ENCODE measurements at regions of chr15 and their contacts with region 1.

Region 1: GRCh38 chr15:54353726-54354125 is 375.5 kb downstream of the UNC13C start:
- DNase-seq: no peak
- ATAC-seq: no peak
- H3K4me3 Mint-ChIP-seq: no peak overlapping the region
- H3K27ac Mint-ChIP-seq: no peak overlapping the region
- H3K4me1 Mint-ChIP-seq: no peaks in the 10 kb centered on the region
- H3K27me3 Mint-ChIP-seq: no peaks in the 10 kb centered on the region

Region 2: DNA sequence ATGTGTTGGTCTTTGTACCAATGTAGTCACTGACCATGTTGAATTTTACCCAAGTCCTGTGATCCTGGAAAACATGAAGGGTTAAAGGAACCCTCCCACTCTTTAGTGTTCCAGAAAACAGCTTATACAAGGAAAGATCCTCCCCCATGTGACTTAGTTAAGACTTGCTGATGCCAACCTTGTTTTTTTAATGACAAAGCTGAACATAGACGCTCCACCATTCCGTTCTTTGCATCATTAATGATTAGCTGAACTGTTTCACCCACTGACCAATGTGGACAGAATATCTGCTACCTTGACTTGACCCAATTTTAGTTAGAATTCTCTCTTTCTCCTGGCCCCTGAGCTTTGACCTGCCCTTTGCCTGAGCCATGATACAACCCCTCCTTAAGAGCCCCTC is 590.8 kb before region 1 on chr15:
- CTCF ChIA-PET with region 1: no interaction called
- POLR2A ChIA-PET with region 1: no interaction called
- intact Hi-C with region 1: loop called in 1 of 2 experiments (anchors 5 kb)
- DNase-seq: no peak
- ATAC-seq: no peak
- H3K4me3 Mint-ChIP-seq: no peak overlapping the region
- H3K27ac Mint-ChIP-seq: no peak overlapping the region
- H3K4me1 Mint-ChIP-seq: peaks cover 2% of the 10 kb centered on the region
- H3K27me3 Mint-ChIP-seq: peaks cover 26% of the 10 kb centered on the region

Region 3: GRCh38 chr15:53899366-53899765 is 454.4 kb before region 1 on chr15:
- CTCF ChIA-PET with region 1: no interaction called
- POLR2A ChIA-PET with region 1: no interaction called
- intact Hi-C with region 1: no loop called
- DNase-seq: no peak
- ATAC-seq: no peak
- H3K4me3 Mint-ChIP-seq: no peak overlapping the region
- H3K27ac Mint-ChIP-seq: no peak overlapping the region
- H3K4me1 Mint-ChIP-seq: no peaks in the 10 kb centered on the region
- H3K27me3 Mint-ChIP-seq: peaks cover 3% of the 10 kb centered on the region

Measured in activated CD4-positive, alpha-beta T cell treated with anti-CD3 and anti-CD28 coated beads for 36 hours (primary cell).